Caco-2 (cell line): ENCODE measurements at regions of chr12 and their contacts with region 1.

Region 1: DNA sequence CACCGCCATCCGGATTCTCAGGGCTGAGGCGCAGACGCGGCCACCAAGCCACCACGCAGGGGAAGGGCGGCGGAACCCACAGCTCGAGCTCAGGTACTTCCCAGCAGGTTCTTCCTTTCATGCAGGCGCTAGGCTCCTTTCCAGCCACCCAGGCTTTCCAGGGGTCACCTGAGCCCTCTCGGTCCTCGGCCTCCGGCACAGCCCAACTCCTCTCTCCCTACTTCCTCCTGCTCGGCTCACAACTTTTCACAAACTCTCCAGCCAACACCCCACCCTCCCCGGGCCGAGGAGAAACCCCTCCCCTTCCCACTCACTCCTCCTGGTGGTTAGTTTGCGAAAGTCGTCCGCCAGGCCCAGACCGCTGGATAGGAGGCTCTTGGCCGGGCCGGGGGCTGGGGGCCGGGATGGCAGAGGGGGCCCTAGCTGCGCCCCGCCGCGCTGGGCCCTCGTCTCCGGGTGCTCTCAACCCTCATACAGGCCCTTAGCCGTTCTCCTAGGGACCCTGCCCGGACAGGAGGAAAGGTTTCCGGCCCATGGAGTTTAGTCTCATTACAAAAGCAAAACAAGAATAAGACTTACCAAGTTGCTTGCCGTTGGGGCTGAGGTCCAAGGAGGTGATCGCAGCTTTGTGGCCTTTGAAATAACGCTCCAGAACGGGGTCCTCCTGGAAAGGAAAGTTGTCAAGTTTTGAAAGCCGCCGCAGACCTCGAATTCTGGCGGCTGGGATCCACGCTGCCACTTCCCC is at the start of gene GALNT4:
- DNase-seq: peak; percentile 90 to 91
- H3K4me3 ChIP-seq: peak within 1 kb of the TSS; percentile 54
- H3K4me3 Mint-ChIP-seq: peak within 1 kb of the TSS; percentile 99
- H3K27ac Mint-ChIP-seq: peak within 1 kb of the TSS; percentile 96
- H3K4me1 ChIP-seq: peaks cover 19% of the 10 kb centered on the region; the same call in 1 of the 2 replicates
- H3K4me1 Mint-ChIP-seq: peaks cover 4% of the 10 kb centered on the region
- H3K27me3 ChIP-seq: no peaks in the 10 kb centered on the region
- H3K27me3 Mint-ChIP-seq: no peaks in the 10 kb centered on the region
- CTCF ChIP-seq: peak; percentile 75 to 81
- total RNA-seq, gene GALNT4: 6.6 and 7.2 TPM in 2 replicates

Region 2: DNA sequence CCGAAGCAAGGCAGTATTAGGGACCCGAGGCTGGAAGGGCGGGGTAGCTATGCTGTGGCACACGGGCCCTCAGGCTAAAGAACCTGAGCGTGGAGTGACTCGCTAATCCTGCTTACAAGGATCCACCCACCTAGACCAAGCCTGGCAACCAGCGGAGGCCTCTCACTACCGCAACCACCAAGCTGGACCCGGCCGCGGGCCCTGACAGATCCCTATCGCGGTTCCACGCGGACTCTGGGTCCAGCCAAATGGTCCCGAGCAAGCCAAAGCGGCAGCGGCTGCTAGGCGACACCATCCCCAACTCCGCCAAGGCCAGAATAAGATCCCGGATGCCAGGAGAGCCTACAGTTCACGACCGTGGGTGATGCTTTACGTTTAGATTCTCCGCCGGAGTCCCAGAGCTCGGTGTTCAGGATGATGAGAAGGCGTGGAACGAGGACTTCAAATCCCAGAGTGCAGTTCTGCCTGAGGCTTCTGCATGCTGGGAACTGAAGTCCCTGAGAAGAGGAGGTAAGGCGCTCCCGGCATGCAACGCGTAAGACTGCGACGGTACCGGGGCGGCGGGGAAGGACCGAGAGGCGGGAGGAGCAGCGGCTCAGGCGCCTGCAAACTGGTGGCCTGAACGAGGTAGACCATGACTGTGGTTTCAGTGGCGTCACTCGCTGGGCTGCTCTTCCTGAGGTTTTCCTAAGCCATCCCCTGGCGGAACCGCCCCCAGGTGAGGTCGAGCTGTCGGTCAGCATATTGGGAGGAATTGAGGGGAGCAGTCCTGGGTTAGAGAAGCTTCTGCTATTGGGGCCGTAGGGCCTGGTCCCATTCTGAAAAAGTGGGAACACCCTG is 1382.7 kb before region 1 on chr12 and contains the starts of genes CEP290 and TMTC3:
- CTCF ChIA-PET with region 1: no interaction called
- POLR2A ChIA-PET with region 1: no interaction called
- intact Hi-C with region 1: loop called (anchors 10 kb)
- DNase-seq: peak; percentile 96 to 99
- H3K4me3 ChIP-seq: peak within 1 kb of the TSS; percentile 86
- H3K4me3 Mint-ChIP-seq: peak within 1 kb of the TSS; percentile 86
- H3K27ac Mint-ChIP-seq: peak within 1 kb of the TSS; percentile 68
- H3K4me1 ChIP-seq: peaks cover 30% of the 10 kb centered on the region
- H3K4me1 Mint-ChIP-seq: peaks cover 17% of the 10 kb centered on the region
- H3K27me3 ChIP-seq: no peaks in the 10 kb centered on the region
- H3K27me3 Mint-ChIP-seq: no peaks in the 10 kb centered on the region
- CTCF ChIP-seq: no peak
- total RNA-seq, gene CEP290: 14.0 and 16.2 TPM in 2 replicates
- total RNA-seq, gene TMTC3: 31.8 and 31.9 TPM in 2 replicates

Region 3: GRCh38 chr12:89019408-89020120 is 505.1 kb before region 1 on chr12:
- CTCF ChIA-PET with region 1: interaction called, 3 read pairs
- POLR2A ChIA-PET with region 1: no interaction called
- intact Hi-C with region 1: loop called (anchors 1 kb)
- DNase-seq: peak; percentile 80 to 82
- H3K4me3 ChIP-seq: peak overlapping the region; percentile 36
- H3K4me3 Mint-ChIP-seq: no peak overlapping the region
- H3K27ac Mint-ChIP-seq: no peak overlapping the region
- H3K4me1 ChIP-seq: peaks cover 11% of the 10 kb centered on the region
- H3K4me1 Mint-ChIP-seq: peaks cover 10% of the 10 kb centered on the region
- H3K27me3 ChIP-seq: no peaks in the 10 kb centered on the region
- H3K27me3 Mint-ChIP-seq: no peaks in the 10 kb centered on the region
- CTCF ChIP-seq: peak; percentile 83 to 85

Region 4: GRCh38 chr12:89051065-89051677 is 473.5 kb before region 1 on chr12:
- CTCF ChIA-PET with region 1: no interaction called
- POLR2A ChIA-PET with region 1: no interaction called
- intact Hi-C with region 1: loop called (anchors 1 kb)
- DNase-seq: peak in 1 of 2 experiments; percentile 61
- H3K4me3 ChIP-seq: no peak overlapping the region
- H3K4me3 Mint-ChIP-seq: no peak overlapping the region
- H3K27ac Mint-ChIP-seq: no peak overlapping the region
- H3K4me1 ChIP-seq: no peaks in the 10 kb centered on the region
- H3K4me1 Mint-ChIP-seq: no peaks in the 10 kb centered on the region
- H3K27me3 ChIP-seq: no peaks in the 10 kb centered on the region
- H3K27me3 Mint-ChIP-seq: no peaks in the 10 kb centered on the region
- CTCF ChIP-seq: peak; percentile 83 to 85

Region 5: GRCh38 chr12:89470741-89471509 is 53.8 kb before region 1 on chr12:
- CTCF ChIA-PET with region 1: no interaction called
- POLR2A ChIA-PET with region 1: no interaction called
- intact Hi-C with region 1: loop called (anchors 1 kb)
- DNase-seq: peak in 1 of 2 experiments; percentile 34
- H3K4me3 ChIP-seq: no peak overlapping the region
- H3K4me3 Mint-ChIP-seq: no peak overlapping the region
- H3K27ac Mint-ChIP-seq: no peak overlapping the region
- H3K4me1 ChIP-seq: no peaks in the 10 kb centered on the region
- H3K4me1 Mint-ChIP-seq: no peaks in the 10 kb centered on the region
- H3K27me3 ChIP-seq: no peaks in the 10 kb centered on the region
- H3K27me3 Mint-ChIP-seq: no peaks in the 10 kb centered on the region
- CTCF ChIP-seq: peak; percentile 58 to 61

Region 6: DNA sequence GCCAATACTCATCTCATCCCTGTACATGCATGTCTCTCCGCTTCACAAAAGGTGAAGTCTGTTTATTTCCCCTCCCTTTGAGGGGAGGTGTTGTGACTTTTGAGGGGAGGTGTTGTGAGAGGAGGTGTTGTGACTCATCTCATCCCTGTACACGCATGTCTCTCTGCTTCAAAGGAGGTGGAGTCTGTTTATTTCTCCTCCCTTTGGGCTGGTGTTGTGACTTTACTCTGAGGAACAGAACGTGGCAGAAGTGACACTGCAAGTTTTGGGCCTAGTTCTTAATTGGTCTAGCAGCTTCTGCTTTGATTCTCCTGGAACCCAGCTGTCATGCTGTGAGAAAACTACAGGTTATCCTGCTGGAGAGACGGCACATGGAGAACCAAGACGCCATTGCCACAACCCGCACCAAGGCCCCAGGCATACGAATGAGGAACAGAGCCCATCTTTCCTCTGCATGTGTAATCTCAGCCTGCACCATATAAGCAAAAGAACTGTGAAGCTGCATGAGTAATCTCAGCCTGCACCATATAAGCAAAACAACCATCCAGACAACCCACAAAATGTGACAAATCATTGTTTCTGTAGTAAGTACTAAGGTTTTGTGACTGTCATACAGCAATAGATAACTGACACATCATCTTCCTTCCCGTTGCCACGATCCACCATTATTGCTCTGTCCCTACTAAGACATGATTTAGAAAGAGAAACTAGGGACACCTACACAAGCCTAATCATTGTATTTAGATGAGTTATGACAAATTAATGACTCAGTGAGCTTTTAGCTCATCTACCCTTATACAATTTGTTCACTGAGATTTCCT is 30.1 kb before region 1 on chr12:
- CTCF ChIA-PET with region 1: no interaction called
- POLR2A ChIA-PET with region 1: no interaction called
- intact Hi-C with region 1: loop called (anchors 5 kb)
- DNase-seq: no peak
- H3K4me3 ChIP-seq: no peak overlapping the region
- H3K4me3 Mint-ChIP-seq: no peak overlapping the region
- H3K27ac Mint-ChIP-seq: no peak overlapping the region
- H3K4me1 ChIP-seq: no peaks in the 10 kb centered on the region
- H3K4me1 Mint-ChIP-seq: peaks cover 25% of the 10 kb centered on the region
- H3K27me3 ChIP-seq: no peaks in the 10 kb centered on the region
- H3K27me3 Mint-ChIP-seq: no peaks in the 10 kb centered on the region
- CTCF ChIP-seq: no peak

Region 7: DNA sequence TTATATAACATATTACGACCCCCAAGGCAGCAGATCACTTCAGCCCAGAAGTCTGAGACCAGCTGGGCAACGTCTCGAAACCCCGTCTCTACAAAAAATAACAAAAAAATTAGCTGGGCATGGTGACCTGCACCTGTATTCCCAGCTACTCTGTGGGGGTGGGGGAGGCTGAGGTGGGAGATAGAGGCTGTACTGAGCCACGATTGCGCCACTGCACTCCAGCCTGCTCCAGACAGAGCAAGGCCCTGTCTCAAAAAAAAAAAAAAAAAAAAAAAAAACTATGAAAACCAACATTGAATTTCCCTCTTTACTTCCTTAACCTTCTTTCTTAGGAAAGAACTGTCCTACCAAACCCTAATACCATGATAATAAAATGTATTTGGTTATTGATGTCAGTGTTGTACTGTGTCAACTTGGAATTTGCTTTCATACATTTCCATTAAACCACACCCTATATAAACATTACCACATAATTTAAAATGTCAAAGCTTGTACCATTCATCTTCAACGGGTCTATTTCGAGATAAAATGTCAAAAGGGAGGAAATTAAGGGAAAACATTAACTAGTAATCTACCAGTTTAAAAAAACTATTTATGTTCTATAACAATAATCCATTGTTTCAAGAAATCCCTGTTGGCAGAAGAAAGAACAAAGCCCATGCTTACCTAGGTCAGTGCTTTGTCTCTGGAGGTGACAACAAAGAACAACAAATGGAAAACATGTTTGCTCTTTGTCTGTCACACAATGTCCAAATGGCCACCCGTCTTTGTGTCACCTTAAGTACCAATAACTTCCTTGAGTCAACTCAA is 17.5 kb before region 1 on chr12:
- CTCF ChIA-PET with region 1: no interaction called
- POLR2A ChIA-PET with region 1: no interaction called
- intact Hi-C with region 1: loop called (anchors 1 kb)
- DNase-seq: peak in 1 of 2 experiments; percentile 51
- H3K4me3 ChIP-seq: no peak overlapping the region
- H3K4me3 Mint-ChIP-seq: no peak overlapping the region
- H3K27ac Mint-ChIP-seq: no peak overlapping the region
- H3K4me1 ChIP-seq: 0 out of 2 replicates have a peak, but pooled peaks cover 3% of the 10 kb centered on the region
- H3K4me1 Mint-ChIP-seq: peaks cover 6% of the 10 kb centered on the region
- H3K27me3 ChIP-seq: no peaks in the 10 kb centered on the region
- H3K27me3 Mint-ChIP-seq: no peaks in the 10 kb centered on the region
- CTCF ChIP-seq: no peak

Region 8: DNA sequence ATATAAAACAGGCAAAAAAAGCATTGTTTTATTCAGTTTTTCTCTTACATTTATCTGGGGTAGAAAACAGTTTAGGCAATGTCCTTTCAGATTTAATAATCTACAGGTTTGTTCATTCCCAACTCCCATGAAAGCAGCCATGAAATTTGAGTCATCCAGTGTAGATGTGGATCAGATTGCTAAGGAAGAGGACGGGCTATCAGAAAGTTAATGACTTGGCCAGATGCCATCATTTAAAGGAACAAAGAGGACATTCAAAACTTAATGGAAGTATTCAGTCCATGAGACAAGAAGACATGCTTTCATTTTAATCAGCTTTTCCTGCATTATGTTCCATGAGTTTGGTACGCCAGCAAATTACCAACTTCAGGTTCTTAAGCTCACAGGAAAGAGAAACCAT is 32.3 kb after region 1 on chr12:
- CTCF ChIA-PET with region 1: no interaction called
- POLR2A ChIA-PET with region 1: no interaction called
- intact Hi-C with region 1: no loop called
- DNase-seq: no peak
- H3K4me3 ChIP-seq: no peak overlapping the region
- H3K4me3 Mint-ChIP-seq: no peak overlapping the region
- H3K27ac Mint-ChIP-seq: no peak overlapping the region
- H3K4me1 ChIP-seq: no peaks in the 10 kb centered on the region
- H3K4me1 Mint-ChIP-seq: no peaks in the 10 kb centered on the region
- H3K27me3 ChIP-seq: no peaks in the 10 kb centered on the region
- H3K27me3 Mint-ChIP-seq: no peaks in the 10 kb centered on the region
- CTCF ChIP-seq: no peak

Region 9: GRCh38 chr12:89671469-89671868 is 146.8 kb after region 1 on chr12:
- CTCF ChIA-PET with region 1: no interaction called
- POLR2A ChIA-PET with region 1: no interaction called
- intact Hi-C with region 1: no loop called
- DNase-seq: no peak
- H3K4me3 ChIP-seq: no peak overlapping the region
- H3K4me3 Mint-ChIP-seq: no peak overlapping the region
- H3K27ac Mint-ChIP-seq: no peak overlapping the region
- H3K4me1 ChIP-seq: peaks cover 7% of the 10 kb centered on the region; the same call in 1 of the 2 replicates
- H3K4me1 Mint-ChIP-seq: peaks cover 26% of the 10 kb centered on the region
- H3K27me3 ChIP-seq: no peaks in the 10 kb centered on the region
- H3K27me3 Mint-ChIP-seq: no peaks in the 10 kb centered on the region
- CTCF ChIP-seq: no peak